ENCODE measurements at regions of chr5 and their contacts with region 1.

Region 1: DNA sequence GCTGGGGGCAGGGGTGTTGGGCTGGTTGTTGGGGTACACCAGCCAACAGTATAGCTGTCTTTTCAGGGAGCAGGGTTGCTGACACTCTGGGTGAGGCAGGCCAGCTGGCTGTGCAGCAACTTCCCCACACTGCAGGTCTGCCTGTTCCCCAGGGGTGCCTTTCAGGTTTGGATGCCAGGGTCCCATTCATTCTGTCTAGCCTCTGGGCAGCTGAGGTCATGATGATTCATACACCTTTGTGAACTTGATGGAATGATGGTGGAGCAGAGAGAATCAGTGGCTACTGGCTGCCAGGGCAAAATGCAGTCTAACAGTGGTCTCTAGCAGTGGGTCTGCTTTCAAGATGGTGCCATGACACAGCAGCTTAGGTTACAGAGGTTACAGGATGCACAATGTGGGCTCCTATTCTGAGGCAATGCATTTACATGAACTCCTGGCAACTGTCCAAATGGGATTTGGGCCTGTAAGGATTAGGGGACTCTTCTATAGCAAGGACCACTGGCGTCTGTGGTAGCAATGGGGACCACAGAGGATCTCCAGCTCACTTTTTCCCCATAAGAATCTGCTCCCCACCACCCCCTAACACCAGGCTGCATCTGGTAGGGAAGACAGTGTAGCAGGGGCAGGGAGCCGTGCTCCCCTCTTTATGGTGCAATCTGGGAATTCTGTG is 103.7 kb downstream of the FEM1C start:
- DNase-seq: peak; percentile 45 to 55
- H3K4me3 ChIP-seq: no peak overlapping the region
- H3K27ac ChIP-seq: no peak overlapping the region
- H3K4me1 ChIP-seq: peaks cover 31% of the 10 kb centered on the region
- H3K27me3 ChIP-seq: no peaks in the 10 kb centered on the region
- CTCF ChIP-seq: no peak

Region 2: GRCh38 chr5:115460472-115460871 is 19.6 kb after region 1 on chr5:
- CTCF ChIA-PET with region 1: no interaction called
- POLR2A ChIA-PET with region 1: no interaction called
- intact Hi-C with region 1: loop called (anchors 2 kb)
- DNase-seq: peak; percentile 69 to 93
- H3K4me3 ChIP-seq: 0 out of 2 replicates have a peak overlapping the region, but pooled peaks have one; percentile 8
- H3K27ac ChIP-seq: peak overlapping the region; percentile 94
- H3K4me1 ChIP-seq: peaks cover 55% of the 10 kb centered on the region
- H3K27me3 ChIP-seq: no peaks in the 10 kb centered on the region
- CTCF ChIP-seq: no peak

Measured in PC-9 (cell line).